GM13977 (cell line): ENCODE measurements at regions of chr3 and their contacts with region 1.

Region 1: GRCh38 chr3:70358978-70359580 is 46.6 kb upstream of the MDFIC2 start:
- DNase-seq: no peak
- CTCF ChIP-seq: peak; percentile 62

Region 2: DNA sequence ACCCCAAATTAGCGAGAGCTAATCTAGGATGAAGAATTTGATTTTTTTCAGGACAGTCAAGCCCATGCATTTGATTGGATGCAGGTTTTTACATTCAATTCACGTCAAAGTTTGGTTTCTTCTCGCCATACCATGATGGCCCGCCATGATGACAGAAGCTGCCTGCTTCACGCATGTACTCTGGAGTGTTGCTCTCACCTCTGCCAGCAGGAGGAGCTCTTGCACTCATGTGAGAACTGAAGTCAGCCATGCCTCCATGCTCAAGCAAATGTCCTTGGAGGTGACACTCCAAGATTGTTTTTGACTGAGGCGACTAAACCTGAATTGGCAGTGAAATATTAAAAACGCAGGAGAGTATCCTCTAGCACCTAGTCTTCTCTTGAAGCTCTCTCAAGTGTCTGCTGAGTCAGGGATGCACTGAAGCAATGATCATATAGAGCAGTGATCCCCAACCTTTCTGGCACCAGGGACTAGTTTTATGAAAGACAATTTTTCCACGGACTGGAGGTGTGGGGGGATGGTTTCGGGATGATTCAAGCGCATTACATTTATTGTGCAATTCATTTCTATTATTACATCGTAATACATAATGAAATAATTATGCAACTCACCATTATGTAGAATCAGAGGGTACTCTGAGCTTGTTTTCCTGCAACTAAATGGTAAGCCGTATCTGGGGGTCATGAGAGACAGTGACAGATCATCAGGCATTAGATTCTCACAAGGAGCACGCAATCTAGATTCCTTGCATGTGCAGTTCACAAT is 238.5 kb before region 1 on chr3:
- in situ Hi-C with region 1: loop called (anchors 25 kb)
- DNase-seq: peak; percentile 67
- CTCF ChIP-seq: peak; percentile 97